Activated CD8-positive, alpha-beta memory T cell treated with anti-CD3 and anti-CD28 coated beads, Interleukin-2, amount 10 ng/mL, durations not matched to agents 7 days and 5 days (primary cell): ENCODE measurements at regions of chr10 and their contacts with region 1.

Region 1: GRCh38 chr10:119542988-119543813 is 682 bp upstream of the RGS10 start:
- DNase-seq: peak; percentile 83
- ATAC-seq: peak; percentile 28
- H3K4me3 Mint-ChIP-seq: peak overlapping the region; percentile 75
- H3K27ac Mint-ChIP-seq: peak overlapping the region; percentile 83
- H3K4me1 Mint-ChIP-seq: peaks cover 45% of the 10 kb centered on the region
- H3K27me3 Mint-ChIP-seq: peaks cover 18% of the 10 kb centered on the region

Region 2: GRCh38 chr10:119199231-119199992 is 343.8 kb before region 1 on chr10:
- CTCF ChIA-PET with region 1: interaction called, 21 read pairs
- DNase-seq: peak; percentile 64
- ATAC-seq: peak; percentile 82
- H3K4me3 Mint-ChIP-seq: no peak overlapping the region
- H3K27ac Mint-ChIP-seq: no peak overlapping the region
- H3K4me1 Mint-ChIP-seq: peaks cover 14% of the 10 kb centered on the region
- H3K27me3 Mint-ChIP-seq: peaks cover 4% of the 10 kb centered on the region

Region 3: DNA sequence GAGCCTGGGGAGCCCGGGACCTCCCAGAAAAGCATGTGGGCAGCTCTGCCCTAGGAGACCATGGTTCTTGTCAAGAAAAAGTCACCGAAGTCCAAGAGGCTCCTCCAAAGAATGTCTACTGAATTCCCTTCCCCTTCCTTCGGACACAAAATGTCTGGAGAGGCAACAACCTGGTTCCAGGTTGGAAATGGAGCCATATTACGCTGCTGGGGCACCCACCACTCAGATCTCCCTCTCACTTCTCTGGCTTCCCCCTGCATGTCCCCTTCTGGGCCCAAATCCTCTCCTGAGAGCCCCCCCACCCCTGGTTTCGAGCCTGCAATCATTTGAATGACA is 53.2 kb before region 1 on chr10:
- CTCF ChIA-PET with region 1: interaction called, 28 read pairs
- DNase-seq: no peak
- ATAC-seq: no peak
- H3K4me3 Mint-ChIP-seq: peak overlapping the region; percentile 13
- H3K27ac Mint-ChIP-seq: peak overlapping the region; percentile 92
- H3K4me1 Mint-ChIP-seq: peaks cover 46% of the 10 kb centered on the region
- H3K27me3 Mint-ChIP-seq: no peaks in the 10 kb centered on the region

Region 4: GRCh38 chr10:119531067-119531466 is 12.1 kb before region 1 on chr10:
- CTCF ChIA-PET with region 1: interaction called, 11 read pairs
- DNase-seq: no peak
- ATAC-seq: no peak
- H3K4me3 Mint-ChIP-seq: no peak overlapping the region
- H3K27ac Mint-ChIP-seq: no peak overlapping the region
- H3K4me1 Mint-ChIP-seq: peaks cover 39% of the 10 kb centered on the region
- H3K27me3 Mint-ChIP-seq: no peaks in the 10 kb centered on the region

Region 5: DNA sequence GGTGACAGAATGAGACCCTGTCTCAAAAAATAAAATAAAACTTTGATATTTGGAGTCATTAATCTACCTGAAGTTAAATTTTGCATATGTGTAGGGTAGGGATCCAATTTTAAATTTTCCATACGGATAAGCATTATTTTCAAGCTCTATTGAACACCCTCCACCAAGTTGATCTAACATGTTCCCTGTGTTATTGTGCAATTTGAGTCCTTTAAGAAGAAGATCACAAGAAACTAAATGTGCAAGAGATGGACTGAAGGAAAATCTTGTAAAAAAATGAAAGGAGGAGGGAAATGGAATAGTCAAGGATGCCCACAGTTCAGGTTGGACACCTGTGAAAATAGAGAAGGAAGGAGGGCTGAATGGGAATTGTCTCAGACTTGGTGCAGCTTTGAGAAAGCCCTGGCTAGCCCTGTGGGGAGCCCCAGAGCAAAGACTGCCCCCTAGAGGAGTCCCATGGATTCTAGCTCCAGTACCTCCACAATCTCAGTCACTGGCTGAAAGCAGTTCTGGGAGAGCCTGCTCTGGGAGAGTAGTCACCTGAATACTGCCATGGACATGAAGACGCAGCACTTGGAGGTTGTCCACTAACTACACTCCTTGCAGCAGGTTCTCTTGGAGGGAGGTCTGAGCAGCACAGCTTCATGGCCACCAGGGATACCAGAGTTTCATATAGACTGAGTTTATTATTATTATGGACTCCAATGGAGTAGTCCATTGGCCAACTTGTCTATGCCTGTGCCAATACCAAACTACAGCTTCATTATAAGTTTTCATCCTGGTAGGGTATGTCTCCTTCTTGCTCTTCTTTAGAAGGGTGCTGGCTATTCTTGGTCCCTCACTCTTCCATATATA is 59.3 kb after region 1 on chr10:
- CTCF ChIA-PET with region 1: interaction called, 17 read pairs
- DNase-seq: peak; percentile 64
- ATAC-seq: peak; percentile 87
- H3K4me3 Mint-ChIP-seq: no peak overlapping the region
- H3K27ac Mint-ChIP-seq: peak overlapping the region; percentile 19
- H3K4me1 Mint-ChIP-seq: peaks cover 7% of the 10 kb centered on the region
- H3K27me3 Mint-ChIP-seq: no peaks in the 10 kb centered on the region